ENCODE measurements at regions of chr19 and their contacts with region 1.

Region 1: DNA sequence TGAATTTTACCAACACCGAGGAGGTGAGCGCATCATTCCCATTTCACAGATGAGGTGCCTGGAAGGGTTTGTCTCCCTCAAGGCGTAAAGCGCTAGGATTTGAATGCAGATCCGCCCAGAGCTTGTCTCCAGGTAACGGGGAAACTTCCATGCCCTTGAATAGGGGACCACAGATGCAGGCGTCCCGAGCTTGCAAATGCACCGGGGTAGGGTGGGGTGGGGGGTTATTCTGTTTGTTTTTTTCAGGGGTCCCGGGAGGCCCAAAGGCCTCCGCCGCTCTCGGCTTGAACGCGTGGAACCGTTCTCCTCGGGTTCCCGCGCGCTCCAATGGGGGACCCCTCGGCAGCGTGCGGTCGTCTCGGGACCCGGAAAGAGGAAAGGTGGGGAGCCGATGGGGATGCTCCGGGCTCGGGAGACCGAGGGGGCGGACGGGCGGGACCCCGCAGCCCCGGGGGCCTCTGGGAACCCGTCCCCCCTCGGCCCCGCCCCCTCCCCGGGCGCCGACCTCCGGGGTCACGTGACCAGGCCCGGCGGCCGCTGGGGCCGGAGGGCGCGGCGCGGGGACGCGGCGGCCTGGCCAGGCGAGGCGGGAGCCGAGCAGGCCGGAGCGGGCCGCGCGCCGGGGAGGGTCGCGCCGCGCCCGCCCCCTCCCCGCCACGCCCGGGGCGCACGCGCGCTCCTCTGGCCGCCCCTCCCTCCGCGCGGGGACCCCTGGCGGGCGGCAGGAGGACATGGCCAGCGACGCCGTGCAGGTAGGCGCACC is at the start of gene PKN1:
- DNase-seq: no peak
- H3K4me3 ChIP-seq: peak within 1 kb of the TSS; percentile 77 to 98
- H3K27ac ChIP-seq: peak within 1 kb of the TSS; percentile 78 to 82
- H3K4me1 ChIP-seq: peaks cover 3 to 19% of the 10 kb centered on the region in 2 donors
- H3K27me3 ChIP-seq: no peaks in the 10 kb centered on the region
- CTCF ChIP-seq: peak in 1 of 3 experiments; percentile 10
- total RNA-seq, gene PKN1: 231 TPM

Region 2: DNA sequence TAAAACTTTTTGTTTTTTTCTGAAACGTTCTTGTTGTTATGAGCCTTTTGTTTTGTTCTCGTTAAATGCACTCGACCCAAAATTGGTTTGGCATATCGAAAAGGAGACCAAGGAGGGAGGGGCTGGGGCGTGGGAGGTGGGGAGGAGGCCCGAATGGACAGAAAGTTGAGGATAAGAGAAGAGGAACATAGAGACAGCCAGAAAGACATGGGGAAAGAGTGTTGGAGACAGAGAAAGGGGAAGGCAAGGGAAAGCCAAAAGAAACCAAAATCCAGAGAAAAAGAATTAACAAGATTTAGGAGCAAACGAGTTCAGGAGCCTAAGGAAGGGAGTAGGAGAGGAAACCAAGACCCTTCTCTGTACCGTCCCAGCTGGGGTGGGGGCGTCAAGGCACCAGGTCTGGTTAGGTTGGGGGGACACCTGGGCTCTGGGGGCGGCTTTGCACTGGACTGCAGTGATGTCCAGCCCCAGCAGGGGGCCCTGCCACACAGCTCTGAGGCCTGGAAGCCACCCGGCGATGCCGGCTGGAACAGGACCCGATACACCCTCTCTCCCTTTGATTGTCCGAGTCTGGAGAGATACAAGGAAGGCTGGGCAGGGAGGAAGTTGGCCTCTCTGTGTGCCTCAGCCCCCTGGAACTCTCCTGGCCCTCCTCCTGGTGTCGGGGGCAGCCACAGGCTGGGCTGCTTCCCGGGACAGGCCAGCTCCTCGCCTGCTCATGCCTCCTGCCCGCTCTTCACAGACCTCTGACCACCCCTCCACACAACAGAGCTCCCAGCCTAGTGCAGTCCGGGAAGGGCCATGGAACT is 285.0 kb before region 1 on chr19:
- intact Hi-C with region 1: loop called (anchors 5 kb)
- DNase-seq: peak in 1 of 2 donors; percentile 82
- H3K4me3 ChIP-seq: peak overlapping the region in 1 of 2 donors; percentile 45
- H3K27ac ChIP-seq: peak overlapping the region; percentile 44 to 83
- H3K4me1 ChIP-seq: peaks cover 10 to 20% of the 10 kb centered on the region in 2 donors
- H3K27me3 ChIP-seq: no peaks in the 10 kb centered on the region
- CTCF ChIP-seq: peak; percentile 83 to 91 (median 89)

Region 3: GRCh38 chr19:14459703-14460102 is 26.7 kb after region 1 on chr19:
- intact Hi-C with region 1: no loop called
- DNase-seq: no peak
- H3K4me3 ChIP-seq: no peak overlapping the region
- H3K27ac ChIP-seq: no peak overlapping the region
- H3K4me1 ChIP-seq: no peaks in the 10 kb centered on the region
- H3K27me3 ChIP-seq: no peaks in the 10 kb centered on the region
- CTCF ChIP-seq: no peak

Region 4: GRCh38 chr19:14472202-14472938 is 39.4 kb after region 1 on chr19:
- intact Hi-C with region 1: loop called (anchors 5 kb)
- DNase-seq: peak in 1 of 2 donors; percentile 79
- H3K4me3 ChIP-seq: peak overlapping the region; percentile 27 to 34
- H3K27ac ChIP-seq: no peak overlapping the region
- H3K4me1 ChIP-seq: peaks cover 8 to 21% of the 10 kb centered on the region in 2 donors
- H3K27me3 ChIP-seq: peaks cover 4% of the 10 kb centered on the region
- CTCF ChIP-seq: peak; percentile 94 to 100 (median 99)

Region 5: GRCh38 chr19:14505488-14506432 is 72.8 kb after region 1 on chr19:
- intact Hi-C with region 1: no loop called
- DNase-seq: no peak
- H3K4me3 ChIP-seq: no peak overlapping the region
- H3K27ac ChIP-seq: no peak overlapping the region
- H3K4me1 ChIP-seq: no peaks in the 10 kb centered on the region
- H3K27me3 ChIP-seq: no peaks in the 10 kb centered on the region
- CTCF ChIP-seq: peak in 2 of 3 experiments; percentile 31 to 43